ENCODE measurements at regions of chr4 and their contacts with region 1.

Region 1: GRCh38 chr4:81405894-81406401 is 65.8 kb downstream of the RASGEF1B start:
- DNase-seq: peak in 1 of 3 donors; percentile 54
- ATAC-seq: peak; percentile 90 to 97 (median 94)
- H3K4me3 ChIP-seq: peak overlapping the region in 1 of 3 donors; percentile 12
- H3K27ac ChIP-seq: no peak overlapping the region
- H3K4me1 ChIP-seq: no peaks in the 10 kb centered on the region
- H3K27me3 ChIP-seq: no peaks in the 10 kb centered on the region
- CTCF ChIP-seq: peak; percentile 71 to 93 (median 80)
- POLR2A ChIP-seq: no peak

Region 2: GRCh38 chr4:81648576-81649275 is 242.8 kb after region 1 on chr4:
- intact Hi-C with region 1: no loop called
- DNase-seq: no peak
- ATAC-seq: no peak
- H3K4me3 ChIP-seq: no peak overlapping the region
- H3K27ac ChIP-seq: no peak overlapping the region
- H3K4me1 ChIP-seq: peaks cover 0 to 30% (median 10%) of the 10 kb centered on the region in 4 donors
- H3K27me3 ChIP-seq: no peaks in the 10 kb centered on the region
- CTCF ChIP-seq: no peak
- POLR2A ChIP-seq: no peak

Region 3: GRCh38 chr4:82201805-82202641 is 796.1 kb after region 1 on chr4:
- intact Hi-C with region 1: loop called in 1 of 2 experiments (anchors 10 kb)
- DNase-seq: peak in 1 of 3 donors; percentile 29
- ATAC-seq: peak; percentile 62 to 83 (median 72)
- H3K4me3 ChIP-seq: no peak overlapping the region
- H3K27ac ChIP-seq: no peak overlapping the region
- H3K4me1 ChIP-seq: no peaks in the 10 kb centered on the region
- H3K27me3 ChIP-seq: no peaks in the 10 kb centered on the region
- CTCF ChIP-seq: peak; percentile 58 to 86 (median 69)
- POLR2A ChIP-seq: no peak

Region 4: DNA sequence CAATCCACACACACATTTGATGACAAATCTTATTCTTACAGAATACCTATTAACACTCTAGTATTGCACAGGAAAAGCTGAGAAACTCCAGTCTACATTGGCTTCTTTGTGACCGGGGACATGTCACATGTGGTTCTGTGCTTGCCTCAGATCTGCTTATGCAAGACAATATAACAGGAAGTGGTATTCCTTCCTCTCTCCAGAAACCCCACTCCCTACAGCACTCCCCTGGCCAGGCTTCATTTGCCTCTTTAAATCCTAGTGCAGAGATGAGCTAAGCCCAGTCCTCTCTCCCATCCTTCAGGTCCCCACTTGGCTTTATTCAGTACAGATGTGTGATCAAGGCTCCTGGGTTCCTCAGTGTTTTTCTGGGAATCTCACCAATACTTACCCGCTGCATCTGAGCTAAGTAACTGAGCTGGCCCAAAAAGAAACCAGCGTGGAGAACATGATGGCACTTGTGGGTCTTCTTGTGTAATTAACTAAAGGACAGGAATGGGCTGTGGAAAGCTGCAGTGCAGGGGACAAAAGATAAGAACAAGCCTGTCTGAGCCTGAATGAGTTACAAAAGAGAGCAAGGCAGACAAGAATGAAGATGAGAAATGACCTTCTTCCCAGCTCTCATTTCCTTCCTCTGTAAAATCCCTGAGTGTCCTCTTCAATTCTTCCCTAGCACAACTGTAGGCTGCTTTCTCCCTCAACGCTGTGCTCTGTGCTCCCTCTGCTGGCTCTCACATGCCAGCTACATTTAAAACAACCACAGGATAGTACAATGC is 862.3 kb after region 1 on chr4:
- intact Hi-C with region 1: loop called in 1 of 2 experiments (anchors 5 kb)
- DNase-seq: peak in 2 of 3 donors; percentile 45 to 65
- ATAC-seq: peak; percentile 97 to 99 (median 99)
- H3K4me3 ChIP-seq: no peak overlapping the region
- H3K27ac ChIP-seq: no peak overlapping the region
- H3K4me1 ChIP-seq: no peaks in the 10 kb centered on the region
- H3K27me3 ChIP-seq: no peaks in the 10 kb centered on the region
- CTCF ChIP-seq: peak; percentile 68 to 80 (median 78)
- POLR2A ChIP-seq: no peak